ENCODE measurements at regions of chr5 and their contacts with region 1.

Region 1: GRCh38 chr5:134304311-134304710 is 62.7 kb downstream of the CDKL3 start:
- DNase-seq: no peak
- H3K4me3 ChIP-seq: no peak overlapping the region
- H3K27ac ChIP-seq: no peak overlapping the region
- H3K4me1 ChIP-seq: peaks cover 4% of the 10 kb centered on the region
- H3K27me3 ChIP-seq: no peaks in the 10 kb centered on the region
- CTCF ChIP-seq: no peak

Region 2: GRCh38 chr5:134209477-134210240 is 94.7 kb before region 1 on chr5:
- intact Hi-C with region 1: no loop called
- DNase-seq: no peak
- H3K4me3 ChIP-seq: no peak overlapping the region
- H3K27ac ChIP-seq: no peak overlapping the region
- H3K4me1 ChIP-seq: peaks cover 8% of the 10 kb centered on the region
- H3K27me3 ChIP-seq: no peaks in the 10 kb centered on the region
- CTCF ChIP-seq: no peak

Region 3: DNA sequence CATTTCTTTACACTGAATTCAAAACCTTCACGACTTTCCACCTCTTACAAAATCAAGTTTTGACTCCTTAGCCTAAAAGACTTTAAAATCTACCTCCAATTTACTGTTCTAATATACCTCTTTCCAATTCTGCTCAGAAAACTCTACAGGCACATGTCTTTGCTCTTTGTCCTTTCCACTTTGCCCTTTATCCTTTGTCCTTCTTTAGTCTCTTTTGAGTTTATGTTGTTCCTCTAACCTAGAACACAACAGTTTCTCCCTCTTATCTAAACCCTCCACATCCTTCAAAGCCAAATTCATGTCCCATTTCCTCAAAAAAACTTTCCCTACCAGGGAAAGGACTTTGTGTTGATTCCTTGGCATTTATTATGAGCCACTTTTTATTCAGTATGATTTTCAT is 61.3 kb after region 1 on chr5:
- intact Hi-C with region 1: loop called (anchors 10 kb)
- DNase-seq: no peak
- H3K4me3 ChIP-seq: no peak overlapping the region
- H3K27ac ChIP-seq: no peak overlapping the region
- H3K4me1 ChIP-seq: no peaks in the 10 kb centered on the region
- H3K27me3 ChIP-seq: no peaks in the 10 kb centered on the region
- CTCF ChIP-seq: no peak

Region 4: GRCh38 chr5:134577796-134578363 is 273.6 kb after region 1 on chr5:
- intact Hi-C with region 1: loop called (anchors 5 kb)
- DNase-seq: peak; percentile 85
- H3K4me3 ChIP-seq: no peak overlapping the region
- H3K27ac ChIP-seq: no peak overlapping the region
- H3K4me1 ChIP-seq: no peaks in the 10 kb centered on the region
- H3K27me3 ChIP-seq: no peaks in the 10 kb centered on the region
- CTCF ChIP-seq: peak; percentile 86

Region 5: DNA sequence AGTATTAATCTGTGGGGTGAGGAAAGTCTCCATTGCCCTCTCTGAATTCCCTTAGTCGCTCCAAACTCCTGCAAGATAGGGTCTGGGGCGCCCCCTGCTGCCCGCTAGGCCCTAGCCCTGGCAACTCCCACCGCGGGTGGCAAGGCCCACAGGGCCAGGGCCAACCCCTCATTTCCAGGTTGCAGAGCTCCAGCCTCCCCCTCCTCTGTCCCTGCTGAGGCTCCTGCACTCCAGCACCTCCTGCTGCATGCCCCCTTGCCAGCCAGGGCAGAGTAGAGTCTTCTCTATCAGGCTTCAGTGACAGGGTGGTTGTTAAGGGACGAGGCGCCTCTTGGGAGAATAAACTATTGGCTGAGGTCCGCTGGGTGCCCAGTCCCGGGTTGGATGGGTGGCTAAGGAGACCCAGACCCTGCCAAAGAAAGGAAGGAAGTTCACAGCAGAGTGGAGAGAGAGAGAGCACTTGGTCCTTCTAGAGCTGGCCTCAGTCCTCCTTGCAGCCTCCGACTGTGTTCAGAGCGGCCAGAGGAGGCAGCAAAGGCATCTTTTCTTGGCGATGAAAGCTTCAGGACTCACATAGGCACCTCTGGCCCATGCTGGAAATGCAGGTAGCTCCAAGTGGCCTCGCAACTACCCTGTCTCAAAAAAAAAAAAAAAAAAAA is 282.7 kb after region 1 on chr5:
- intact Hi-C with region 1: loop called (anchors 2 kb)
- DNase-seq: peak; percentile 88
- H3K4me3 ChIP-seq: no peak overlapping the region
- H3K27ac ChIP-seq: no peak overlapping the region
- H3K4me1 ChIP-seq: no peaks in the 10 kb centered on the region
- H3K27me3 ChIP-seq: no peaks in the 10 kb centered on the region
- CTCF ChIP-seq: peak; percentile 84

Measured in colonic mucosa (tissue), 4 donors.